ENCODE measurements at regions of chr5 and their contacts with region 1.

Region 1: DNA sequence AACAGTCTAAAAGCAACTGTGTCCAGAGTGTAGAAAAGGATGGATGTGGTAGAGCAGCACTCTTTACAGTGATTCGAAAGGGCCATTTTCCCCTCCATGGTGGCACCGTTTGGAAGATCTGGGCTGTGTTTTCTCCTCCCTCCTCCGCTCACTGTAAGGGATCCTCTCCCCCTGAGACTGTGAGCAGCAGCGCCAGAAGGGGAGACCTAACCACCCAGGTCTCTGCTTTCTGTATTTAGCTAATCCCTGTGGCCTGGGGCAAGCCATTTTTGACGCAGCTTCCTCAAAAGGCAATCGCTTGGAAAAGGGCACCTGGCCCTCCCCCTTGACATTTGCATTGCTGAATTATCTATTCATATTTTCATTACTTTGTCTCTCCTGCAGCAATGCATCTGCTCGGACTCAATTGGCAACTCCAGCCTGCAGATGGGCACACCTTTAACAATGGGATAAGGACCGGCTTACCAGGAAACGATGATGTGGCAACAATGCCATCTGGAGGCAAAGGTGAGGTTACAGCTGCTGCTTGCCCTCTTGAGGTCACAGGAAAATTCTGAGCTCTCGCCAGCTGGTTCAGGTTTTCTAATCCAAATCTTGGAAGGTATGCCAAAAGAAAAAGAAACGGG is 244.3 kb upstream of the WWC1 start:
- DNase-seq: peak in 2 of 3 donors; percentile 31 to 69
- ATAC-seq: peak; percentile 92 to 96 (median 96)
- H3K4me3 ChIP-seq: no peak overlapping the region
- H3K27ac ChIP-seq: no peak overlapping the region
- H3K4me1 ChIP-seq: no peaks in the 10 kb centered on the region
- H3K27me3 ChIP-seq: no peaks in the 10 kb centered on the region
- CTCF ChIP-seq: peak; percentile 44 to 60 (median 54)
- POLR2A ChIP-seq: no peak

Region 2: DNA sequence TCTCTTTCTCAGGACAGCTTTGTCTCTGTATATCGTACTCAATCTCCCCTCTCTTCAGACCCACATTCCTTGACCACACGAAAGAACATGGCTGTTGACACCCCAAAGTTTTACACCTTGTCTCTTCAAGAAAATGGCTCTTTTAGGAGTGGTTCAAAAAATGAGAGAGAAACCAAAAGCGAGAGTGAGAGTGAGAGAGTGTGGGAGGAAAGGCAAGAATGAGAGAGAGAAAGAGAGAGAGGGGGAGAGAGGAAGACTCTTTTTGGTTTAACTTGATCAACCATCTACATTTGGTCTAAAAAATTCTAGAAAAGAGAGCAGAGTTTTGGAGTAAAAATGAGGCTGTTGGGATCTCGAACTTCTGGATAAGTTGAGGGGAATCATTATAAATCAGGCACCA is 337.5 kb before region 1 on chr5:
- intact Hi-C with region 1: loop called in 1 of 2 experiments (anchors 10 kb)
- DNase-seq: no peak
- ATAC-seq: no peak
- H3K4me3 ChIP-seq: no peak overlapping the region
- H3K27ac ChIP-seq: no peak overlapping the region
- H3K4me1 ChIP-seq: no peaks in the 10 kb centered on the region
- H3K27me3 ChIP-seq: no peaks in the 10 kb centered on the region
- CTCF ChIP-seq: no peak
- POLR2A ChIP-seq: no peak

Region 3: DNA sequence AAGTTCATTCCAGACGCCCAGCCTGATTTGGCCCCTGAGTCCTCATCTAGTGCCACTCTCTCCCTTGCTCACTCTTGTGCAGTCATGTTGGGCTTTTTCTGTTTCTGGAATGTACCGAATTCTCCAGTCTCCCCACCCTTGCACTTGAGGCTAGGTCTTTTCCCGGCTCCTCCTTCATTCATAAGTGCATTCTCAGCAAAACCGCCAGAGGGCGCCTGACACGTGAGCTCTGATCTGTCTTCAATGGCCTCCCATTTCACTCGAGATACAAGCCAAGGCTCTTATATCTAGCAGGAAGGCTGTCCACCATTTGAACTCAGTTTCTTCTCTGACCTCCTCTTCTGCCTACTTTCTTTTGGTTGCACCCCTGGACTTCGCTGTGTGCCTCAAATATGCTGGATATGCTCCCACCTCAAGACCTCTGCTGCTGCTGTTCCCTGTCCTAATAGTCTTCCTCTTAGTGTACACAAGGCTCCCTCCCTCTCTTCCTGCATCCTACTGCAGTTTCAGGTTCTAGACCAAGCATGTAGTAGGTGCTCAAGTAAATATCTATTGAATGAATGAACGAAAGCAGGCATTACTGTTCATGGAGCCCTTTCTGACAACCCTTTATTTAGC is 323.8 kb before region 1 on chr5:
- intact Hi-C with region 1: loop called (anchors 10 kb)
- DNase-seq: peak; percentile 62 to 68 (median 65)
- ATAC-seq: peak; percentile 94 to 98 (median 98)
- H3K4me3 ChIP-seq: no peak overlapping the region
- H3K27ac ChIP-seq: no peak overlapping the region
- H3K4me1 ChIP-seq: no peaks in the 10 kb centered on the region
- H3K27me3 ChIP-seq: no peaks in the 10 kb centered on the region
- CTCF ChIP-seq: peak; percentile 81 to 89 (median 88)
- POLR2A ChIP-seq: no peak

Measured in right lobe of liver (tissue), 6 donors.